MCF 10A (cell line): ENCODE measurements at regions of chr6 and their contacts with region 1.

Region 1: DNA sequence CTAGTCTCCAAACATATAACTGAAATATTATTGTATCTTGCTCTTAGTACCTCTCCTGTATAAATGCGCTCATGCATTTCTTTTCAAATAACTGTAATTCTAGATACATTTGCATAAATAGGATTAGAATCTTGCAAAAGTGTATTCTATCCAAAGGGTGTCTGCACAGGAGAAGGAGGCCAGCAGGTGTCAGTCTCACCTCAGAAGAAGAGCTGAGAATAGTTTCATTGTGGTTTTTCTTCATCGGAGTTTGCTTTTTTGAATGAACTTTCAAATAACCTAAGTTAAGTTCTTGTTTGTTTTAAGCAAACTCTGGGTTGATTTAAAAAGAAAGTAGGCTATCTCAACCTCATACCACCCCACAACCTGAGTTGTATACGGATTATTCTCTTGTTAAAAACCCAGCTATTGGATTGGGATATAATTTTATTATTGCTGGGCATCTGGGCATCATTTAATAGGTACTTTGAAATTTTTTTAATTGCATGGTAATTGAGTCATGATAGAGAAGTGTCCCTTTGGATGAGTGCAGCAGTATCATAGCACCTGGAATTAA is 125.0 kb upstream of the MLIP start:
- DNase-seq: peak; percentile 72
- H3K4me3 Mint-ChIP-seq: no peak overlapping the region
- H3K27ac Mint-ChIP-seq: peak overlapping the region; percentile 20
- H3K4me1 Mint-ChIP-seq: peaks cover 34% of the 10 kb centered on the region
- H3K27me3 Mint-ChIP-seq: no peaks in the 10 kb centered on the region
- CTCF ChIP-seq: peak; percentile 90

Region 2: DNA sequence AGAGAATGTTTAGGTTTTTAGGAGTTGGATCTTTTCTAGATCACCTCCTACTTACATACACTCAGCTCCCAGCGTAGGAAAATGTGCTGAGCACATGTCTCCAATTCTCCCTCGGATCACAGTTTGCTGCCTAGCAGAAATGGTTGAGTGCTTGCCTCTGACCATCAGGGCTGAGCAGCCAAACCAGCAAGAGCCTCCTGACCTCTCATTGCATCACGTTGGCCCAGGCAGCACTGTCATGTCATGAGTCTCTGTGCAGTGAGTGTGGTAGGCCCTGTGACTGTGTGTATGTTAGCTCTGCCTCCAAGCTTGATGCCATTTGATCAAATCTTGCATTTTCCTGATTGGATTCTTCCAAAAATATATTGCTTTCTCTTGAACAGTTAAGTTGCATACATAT is 79.4 kb before region 1 on chr6:
- CTCF ChIA-PET with region 1: no interaction called
- POLR2A ChIA-PET with region 1: no interaction called
- intact Hi-C with region 1: no loop called
- DNase-seq: peak; percentile 4
- H3K4me3 Mint-ChIP-seq: no peak overlapping the region
- H3K27ac Mint-ChIP-seq: no peak overlapping the region
- H3K4me1 Mint-ChIP-seq: no peaks in the 10 kb centered on the region
- H3K27me3 Mint-ChIP-seq: no peaks in the 10 kb centered on the region
- CTCF ChIP-seq: no peak

Region 3: GRCh38 chr6:54244430-54244829 is 258.2 kb after region 1 on chr6:
- CTCF ChIA-PET with region 1: interaction called, 20 read pairs
- POLR2A ChIA-PET with region 1: interaction called, 3 read pairs
- intact Hi-C with region 1: no loop called
- DNase-seq: peak; percentile 40
- H3K4me3 Mint-ChIP-seq: no peak overlapping the region
- H3K27ac Mint-ChIP-seq: no peak overlapping the region
- H3K4me1 Mint-ChIP-seq: no peaks in the 10 kb centered on the region
- H3K27me3 Mint-ChIP-seq: no peaks in the 10 kb centered on the region
- CTCF ChIP-seq: peak; percentile 60

Region 4: GRCh38 chr6:54273214-54273820 is 287.1 kb after region 1 on chr6:
- CTCF ChIA-PET with region 1: interaction called, 60 read pairs
- POLR2A ChIA-PET with region 1: no interaction called
- intact Hi-C with region 1: no loop called
- DNase-seq: no peak
- H3K4me3 Mint-ChIP-seq: no peak overlapping the region
- H3K27ac Mint-ChIP-seq: no peak overlapping the region
- H3K4me1 Mint-ChIP-seq: no peaks in the 10 kb centered on the region
- H3K27me3 Mint-ChIP-seq: no peaks in the 10 kb centered on the region
- CTCF ChIP-seq: no peak

Region 5: GRCh38 chr6:54366667-54367327 is 380.6 kb after region 1 on chr6:
- CTCF ChIA-PET with region 1: no interaction called
- POLR2A ChIA-PET with region 1: no interaction called
- intact Hi-C with region 1: no loop called
- DNase-seq: no peak
- H3K4me3 Mint-ChIP-seq: no peak overlapping the region
- H3K27ac Mint-ChIP-seq: no peak overlapping the region
- H3K4me1 Mint-ChIP-seq: peaks cover 7% of the 10 kb centered on the region
- H3K27me3 Mint-ChIP-seq: no peaks in the 10 kb centered on the region
- CTCF ChIP-seq: no peak

Region 6: DNA sequence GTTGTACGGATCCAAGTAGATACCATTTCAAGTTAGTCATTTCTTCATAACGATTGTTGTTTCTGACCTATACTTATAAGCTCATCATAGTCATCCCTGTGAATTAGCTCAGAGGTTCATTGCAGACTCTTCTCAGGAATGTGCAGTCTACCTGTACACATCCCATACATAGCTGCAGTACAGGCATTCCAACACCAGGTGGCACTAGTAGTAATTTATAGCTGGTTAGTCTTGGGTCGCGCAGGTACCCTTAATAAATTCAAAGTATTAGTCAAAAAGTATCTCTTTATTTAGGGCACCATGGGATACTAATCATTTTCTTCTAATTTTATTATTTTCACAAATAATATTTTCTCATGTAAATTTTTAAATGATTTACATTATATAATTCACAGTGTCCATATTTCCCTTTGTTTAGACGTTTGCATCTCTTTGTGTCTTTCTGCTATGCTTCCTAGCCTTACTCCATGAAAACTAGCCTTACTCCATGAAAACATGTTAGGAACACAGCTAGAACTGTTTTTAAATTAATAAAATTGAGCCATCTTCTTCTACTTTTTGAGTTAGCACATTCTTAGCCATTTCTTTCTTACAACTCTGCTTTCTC is 731.7 kb after region 1 on chr6:
- CTCF ChIA-PET with region 1: interaction called, 19 read pairs
- POLR2A ChIA-PET with region 1: no interaction called
- intact Hi-C with region 1: loop called (anchors 2 kb)
- DNase-seq: peak; percentile 80
- H3K4me3 Mint-ChIP-seq: no peak overlapping the region
- H3K27ac Mint-ChIP-seq: no peak overlapping the region
- H3K4me1 Mint-ChIP-seq: peaks cover 16% of the 10 kb centered on the region
- H3K27me3 Mint-ChIP-seq: no peaks in the 10 kb centered on the region
- CTCF ChIP-seq: peak; percentile 77

Region 7: DNA sequence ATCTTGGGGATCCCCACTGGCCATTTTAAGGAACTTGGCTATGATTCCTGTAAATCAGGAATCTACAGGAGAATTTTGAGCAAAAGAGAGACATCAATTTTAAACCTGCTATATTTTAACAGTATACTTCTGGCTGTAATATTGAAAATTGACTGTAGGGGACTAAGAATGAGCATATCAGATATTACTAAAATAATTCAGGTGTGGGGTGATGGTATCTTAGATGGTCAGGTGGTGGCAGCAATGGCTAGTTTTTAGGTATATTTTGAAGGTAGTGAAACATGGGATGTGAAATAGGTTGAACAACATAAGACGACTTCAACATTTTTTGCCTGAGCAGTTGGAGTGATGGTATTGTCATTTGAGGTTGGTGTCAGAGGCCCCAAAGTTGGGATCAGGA is 892.4 kb after region 1 on chr6:
- CTCF ChIA-PET with region 1: no interaction called
- POLR2A ChIA-PET with region 1: no interaction called
- intact Hi-C with region 1: loop called (anchors 10 kb)
- DNase-seq: peak; percentile 20
- H3K4me3 Mint-ChIP-seq: no peak overlapping the region
- H3K27ac Mint-ChIP-seq: no peak overlapping the region
- H3K4me1 Mint-ChIP-seq: peaks cover 16% of the 10 kb centered on the region
- H3K27me3 Mint-ChIP-seq: no peaks in the 10 kb centered on the region
- CTCF ChIP-seq: peak; percentile 17

Region 8: GRCh38 chr6:55445648-55446204 is 1459.5 kb after region 1 on chr6:
- CTCF ChIA-PET with region 1: no interaction called
- POLR2A ChIA-PET with region 1: no interaction called
- intact Hi-C with region 1: loop called (anchors 10 kb)
- DNase-seq: peak; percentile 50
- H3K4me3 Mint-ChIP-seq: no peak overlapping the region
- H3K27ac Mint-ChIP-seq: no peak overlapping the region
- H3K4me1 Mint-ChIP-seq: peaks cover 9% of the 10 kb centered on the region
- H3K27me3 Mint-ChIP-seq: no peaks in the 10 kb centered on the region
- CTCF ChIP-seq: peak; percentile 68